CD4-positive, alpha-beta T cell (primary cell): ENCODE measurements at regions of chr16 and their contacts with region 1.

Region 1: GRCh38 chr16:47448830-47449575 is 11.9 kb downstream of the ITFG1 start:
- DNase-seq: no peak
- ATAC-seq: no peak
- H3K4me3 ChIP-seq: no peak overlapping the region
- H3K4me3 Mint-ChIP-seq: no peak overlapping the region
- H3K27ac ChIP-seq: no peak overlapping the region
- H3K27ac Mint-ChIP-seq: no peak overlapping the region
- H3K4me1 ChIP-seq: no peaks in the 10 kb centered on the region
- H3K4me1 Mint-ChIP-seq: peaks cover 46% of the 10 kb centered on the region
- H3K27me3 ChIP-seq: no peaks in the 10 kb centered on the region
- H3K27me3 Mint-ChIP-seq: no peaks in the 10 kb centered on the region
- CTCF ChIP-seq: no peak

Region 2: DNA sequence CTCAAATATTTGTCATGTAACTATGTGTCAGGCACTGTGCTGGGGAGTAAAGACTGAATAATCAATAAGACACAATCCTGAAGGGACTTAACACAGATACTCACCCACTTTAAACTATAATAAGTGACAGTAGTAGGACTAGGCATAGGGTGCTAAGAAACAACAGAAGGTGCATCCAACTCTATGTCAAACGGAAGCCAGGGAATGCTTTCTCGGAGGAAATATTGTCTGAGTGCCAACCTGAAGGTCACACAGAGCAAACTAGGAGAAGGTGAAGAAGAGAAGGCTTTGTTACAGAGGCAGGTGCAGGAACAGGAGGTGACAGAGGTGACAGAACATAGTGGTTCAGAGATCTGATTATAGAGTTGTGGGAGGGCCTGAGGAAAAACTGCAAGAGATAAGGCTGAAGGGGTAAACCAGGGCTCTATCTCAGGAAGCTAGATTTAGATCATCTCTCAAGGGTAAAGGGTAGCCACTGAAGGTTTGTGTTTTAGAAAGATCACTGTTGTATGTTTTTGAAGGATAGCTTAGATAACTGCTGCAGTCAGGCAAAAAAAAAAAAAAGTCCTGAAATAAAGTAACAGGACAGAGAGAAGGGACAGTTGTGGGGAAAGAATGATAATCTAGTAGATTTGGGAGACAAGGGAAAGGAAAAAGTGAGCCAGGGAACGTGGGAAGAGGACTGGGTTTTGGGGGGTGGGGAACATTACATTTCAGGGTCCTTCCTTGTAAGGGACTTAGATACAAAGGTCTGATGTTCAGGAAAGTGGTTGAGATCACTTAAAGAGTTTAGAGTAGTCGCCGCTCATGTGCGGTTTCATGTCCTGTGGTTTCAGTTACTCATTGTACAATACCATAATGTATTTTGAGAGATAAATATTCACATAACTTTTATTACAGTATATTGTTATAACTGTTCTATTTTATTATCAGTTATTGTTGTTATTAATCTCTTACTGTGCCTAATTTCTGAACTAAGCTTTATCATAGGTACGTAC is 219.7 kb before region 1 on chr16:
- CTCF ChIA-PET with region 1: no interaction called
- POLR2A ChIA-PET with region 1: no interaction called
- intact Hi-C with region 1: no loop called
- DNase-seq: no peak
- ATAC-seq: no peak
- H3K4me3 ChIP-seq: no peak overlapping the region
- H3K4me3 Mint-ChIP-seq: no peak overlapping the region
- H3K27ac ChIP-seq: no peak overlapping the region
- H3K27ac Mint-ChIP-seq: no peak overlapping the region
- H3K4me1 ChIP-seq: no peaks in the 10 kb centered on the region
- H3K4me1 Mint-ChIP-seq: no peaks in the 10 kb centered on the region
- H3K27me3 ChIP-seq: no peaks in the 10 kb centered on the region
- H3K27me3 Mint-ChIP-seq: no peaks in the 10 kb centered on the region
- CTCF ChIP-seq: no peak

Region 3: GRCh38 chr16:47475786-47476185 is 26.8 kb after region 1 on chr16:
- CTCF ChIA-PET with region 1: no interaction called
- POLR2A ChIA-PET with region 1: no interaction called
- intact Hi-C with region 1: loop called in 1 of 2 experiments (anchors 1 kb)
- DNase-seq: no peak
- ATAC-seq: no peak
- H3K4me3 ChIP-seq: no peak overlapping the region
- H3K4me3 Mint-ChIP-seq: no peak overlapping the region
- H3K27ac ChIP-seq: no peak overlapping the region
- H3K27ac Mint-ChIP-seq: no peak overlapping the region
- H3K4me1 ChIP-seq: no peaks in the 10 kb centered on the region
- H3K4me1 Mint-ChIP-seq: peaks cover 21% of the 10 kb centered on the region
- H3K27me3 ChIP-seq: no peaks in the 10 kb centered on the region
- H3K27me3 Mint-ChIP-seq: no peaks in the 10 kb centered on the region
- CTCF ChIP-seq: no peak

Region 4: DNA sequence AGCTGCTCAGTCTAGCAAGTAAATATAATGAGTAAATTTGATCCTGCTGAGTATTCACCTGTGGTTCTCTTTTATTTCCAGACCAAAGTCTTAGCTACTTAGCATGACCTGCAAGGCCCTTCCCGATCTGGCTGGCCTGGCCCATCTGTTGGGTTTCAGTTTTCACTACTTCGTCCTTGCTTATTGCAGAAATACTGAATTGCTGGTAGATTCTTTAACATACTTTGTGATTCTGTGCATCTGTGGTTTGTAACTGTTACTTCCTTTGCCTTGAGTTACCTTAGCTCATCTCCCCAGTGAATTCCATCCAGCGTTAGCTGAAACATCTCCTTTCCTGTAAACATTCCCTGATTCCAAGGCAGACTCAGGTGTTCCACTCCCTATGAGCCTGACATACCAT is 143.2 kb after region 1 on chr16:
- CTCF ChIA-PET with region 1: no interaction called
- POLR2A ChIA-PET with region 1: no interaction called
- intact Hi-C with region 1: no loop called
- DNase-seq: peak in 1 of 14 experiments; percentile 33
- ATAC-seq: no peak
- H3K4me3 ChIP-seq: no peak overlapping the region
- H3K4me3 Mint-ChIP-seq: no peak overlapping the region
- H3K27ac ChIP-seq: no peak overlapping the region
- H3K27ac Mint-ChIP-seq: no peak overlapping the region
- H3K4me1 ChIP-seq: no peaks in the 10 kb centered on the region
- H3K4me1 Mint-ChIP-seq: no peaks in the 10 kb centered on the region
- H3K27me3 ChIP-seq: no peaks in the 10 kb centered on the region
- H3K27me3 Mint-ChIP-seq: no peaks in the 10 kb centered on the region
- CTCF ChIP-seq: no peak